Endothelial cell of umbilical vein (primary cell): ENCODE measurements at regions of chr1 and their contacts with region 1.

Region 1: DNA sequence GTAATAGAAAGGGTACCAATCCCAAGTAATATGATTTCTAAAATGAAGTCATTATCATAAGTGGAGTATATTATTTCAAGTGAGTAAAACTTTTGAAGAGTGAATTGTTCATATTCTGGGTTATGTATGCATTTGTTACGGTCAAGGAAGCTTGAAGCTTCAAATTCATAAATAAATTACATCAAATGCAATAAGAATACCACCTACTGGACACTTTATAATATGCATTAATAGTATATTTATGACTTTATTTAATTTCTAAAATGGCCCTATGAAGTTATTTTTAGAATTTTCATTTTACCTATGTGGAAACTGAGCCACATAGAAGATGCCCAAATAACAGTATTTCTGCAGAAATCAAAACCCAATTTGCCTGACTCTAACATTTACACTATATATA is 260.6 kb downstream of the SMYD3 start:
- DNase-seq: peak; percentile 15
- H3K4me3 ChIP-seq: no peak overlapping the region
- H3K27ac ChIP-seq: no peak overlapping the region
- H3K4me1 ChIP-seq: peaks cover 5% of the 10 kb centered on the region
- H3K27me3 ChIP-seq: no peaks in the 10 kb centered on the region
- CTCF ChIP-seq: no peak
- POLR2A ChIP-seq: no peak

Region 2: DNA sequence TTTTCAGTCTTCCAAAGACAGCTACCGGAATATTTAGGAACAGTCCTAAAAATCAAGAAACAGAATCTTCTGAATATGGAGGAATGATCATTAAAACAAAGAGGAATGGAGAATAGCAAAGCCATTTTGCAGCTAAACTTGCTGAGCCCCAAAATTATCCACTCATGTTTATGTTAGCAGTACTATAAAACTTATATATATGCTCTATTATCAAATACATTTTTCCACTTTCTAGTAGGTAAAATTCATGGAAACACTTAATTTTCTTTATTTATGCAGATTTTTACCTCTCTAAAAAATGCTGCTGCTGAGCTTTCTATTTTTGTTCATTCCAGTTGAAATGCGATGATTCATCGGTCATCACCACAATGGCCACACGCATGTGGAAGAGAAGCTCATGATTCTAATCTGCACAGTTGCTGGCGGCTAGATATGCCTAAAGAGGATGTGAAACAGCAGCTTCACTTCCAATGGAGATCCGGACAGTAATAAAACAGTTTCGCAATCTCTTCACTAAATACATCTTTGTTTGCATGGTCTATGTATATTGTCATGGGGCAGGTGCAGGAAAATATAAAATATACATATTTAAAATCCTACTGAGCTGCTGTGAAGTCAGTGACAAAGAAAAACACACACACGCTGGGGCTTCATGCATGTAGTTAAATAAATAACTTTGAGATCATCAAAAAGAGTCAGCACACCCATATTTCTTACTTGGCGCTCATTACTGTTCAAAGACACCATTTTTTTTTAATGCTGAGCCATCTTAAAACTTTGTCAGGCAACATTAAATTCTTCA is 31.5 kb before region 1 on chr1:
- CTCF ChIA-PET with region 1: interaction called, 10 read pairs
- POLR2A ChIA-PET with region 1: no interaction called
- dilution Hi-C with region 1: no loop called
- intact Hi-C with region 1: no loop called
- DNase-seq: peak; percentile 88
- H3K4me3 ChIP-seq: no peak overlapping the region
- H3K27ac ChIP-seq: peak overlapping the region; percentile 19
- H3K4me1 ChIP-seq: peaks cover 5% of the 10 kb centered on the region
- H3K27me3 ChIP-seq: no peaks in the 10 kb centered on the region
- CTCF ChIP-seq: no peak
- POLR2A ChIP-seq: no peak

Region 3: DNA sequence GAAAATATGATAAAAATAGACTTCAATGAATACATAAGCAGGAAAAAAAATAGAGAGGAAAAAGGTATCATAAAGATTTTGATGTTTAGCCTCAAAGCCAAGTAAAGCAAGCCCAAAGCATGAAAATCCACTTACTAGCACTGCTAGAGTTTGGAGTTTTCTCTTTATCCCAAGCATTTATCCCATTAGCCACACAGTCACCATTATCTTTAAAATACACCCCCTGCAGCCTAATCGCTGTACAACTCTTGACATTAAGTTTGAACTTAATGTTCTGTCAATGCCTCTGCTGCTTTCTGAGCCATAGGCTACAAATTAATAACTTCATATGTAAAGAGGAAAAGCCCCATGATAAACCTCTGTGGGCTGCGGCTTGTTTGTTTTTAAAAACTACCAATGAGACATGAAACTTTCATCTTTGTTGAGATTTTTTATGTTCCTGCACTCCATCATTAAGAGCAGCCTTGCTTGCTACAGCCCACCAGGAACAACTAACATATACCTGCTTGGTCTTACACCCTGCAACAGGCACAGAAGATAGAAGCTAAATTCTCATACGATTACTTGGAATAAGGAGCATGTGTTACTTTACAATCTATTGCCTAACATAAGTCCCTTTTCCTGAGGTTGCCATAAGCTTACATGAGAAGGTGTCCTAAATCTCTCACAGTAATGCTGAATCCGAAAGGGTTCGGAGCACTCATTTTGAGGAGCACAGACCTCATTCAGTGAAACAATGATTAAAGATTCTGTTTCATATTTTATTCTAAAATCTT is 58.2 kb after region 1 on chr1:
- CTCF ChIA-PET with region 1: no interaction called
- POLR2A ChIA-PET with region 1: no interaction called
- dilution Hi-C with region 1: no loop called
- intact Hi-C with region 1: loop called (anchors 2 kb)
- DNase-seq: no peak
- H3K4me3 ChIP-seq: no peak overlapping the region
- H3K27ac ChIP-seq: no peak overlapping the region
- H3K4me1 ChIP-seq: peaks cover 11% of the 10 kb centered on the region
- H3K27me3 ChIP-seq: no peaks in the 10 kb centered on the region
- CTCF ChIP-seq: no peak
- POLR2A ChIP-seq: no peak